ENCODE measurements at regions of chr1 and their contacts with region 1.

Region 1: GRCh38 chr1:232805269-232806185 is at the start of gene MAP10:
- DNase-seq: peak; percentile 77
- H3K4me3 Mint-ChIP-seq: peak within 1 kb of the TSS; percentile 90
- H3K27ac Mint-ChIP-seq: peak within 1 kb of the TSS; percentile 79
- H3K4me1 Mint-ChIP-seq: peaks cover 31% of the 10 kb centered on the region
- H3K27me3 Mint-ChIP-seq: peaks cover 6% of the 10 kb centered on the region
- total RNA-seq, gene MAP10: 3.0 and 3.2 TPM in 2 replicates

Region 2: DNA sequence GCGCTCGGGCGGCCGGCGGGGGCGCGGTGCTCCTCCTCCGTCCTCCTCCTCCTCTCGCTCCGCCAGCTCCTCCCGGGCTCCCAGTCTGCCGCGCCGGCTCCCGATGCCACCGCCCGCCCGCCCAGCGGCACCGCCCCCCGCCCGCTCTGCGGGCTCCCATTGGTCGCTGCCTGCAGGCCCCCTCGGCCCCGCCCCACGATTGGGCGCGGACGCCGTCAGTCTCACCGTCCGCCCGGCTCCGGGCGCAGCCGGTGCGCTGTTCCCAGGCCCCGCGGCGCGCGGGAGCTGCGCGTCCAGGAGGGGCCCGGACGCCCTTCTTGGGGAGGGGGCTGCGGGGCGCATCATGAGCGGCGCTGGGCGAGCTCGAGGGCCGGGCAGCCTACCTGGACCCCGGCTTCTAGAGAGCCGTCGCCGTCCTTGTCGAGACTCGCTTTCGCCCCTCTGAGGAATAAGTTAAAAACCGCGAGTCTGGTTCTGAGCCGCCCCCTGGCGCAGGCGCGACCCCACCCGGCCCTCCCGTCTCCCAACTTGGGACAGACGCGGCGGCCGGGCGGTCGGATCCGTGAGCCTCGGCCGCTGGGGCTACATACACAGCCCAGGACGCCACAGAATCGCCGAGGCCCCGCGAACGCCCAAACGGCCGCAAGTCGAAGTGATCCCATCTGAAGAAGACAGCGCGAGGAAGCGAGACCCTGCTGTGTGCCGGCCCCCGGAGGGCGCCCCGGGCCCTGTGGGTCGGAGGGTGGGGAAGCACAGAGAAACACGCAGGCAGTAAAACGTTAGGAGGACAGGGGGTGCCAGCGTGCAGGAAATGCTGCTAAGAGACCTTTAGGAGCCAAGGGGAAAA is 175.3 kb before region 1 on chr1 and contains the start of gene SIPA1L2:
- intact Hi-C with region 1: loop called (anchors 5 kb)
- DNase-seq: peak; percentile 80
- H3K4me3 Mint-ChIP-seq: peak within 1 kb of the TSS; percentile 86
- H3K27ac Mint-ChIP-seq: no peak within 1 kb of the TSS
- H3K4me1 Mint-ChIP-seq: peaks cover 9% of the 10 kb centered on the region
- H3K27me3 Mint-ChIP-seq: peaks cover 57% of the 10 kb centered on the region
- total RNA-seq, gene SIPA1L2: 3.4 and 3.7 TPM in 2 replicates

Region 3: GRCh38 chr1:233113009-233113879 is 307.7 kb after region 1 on chr1:
- intact Hi-C with region 1: loop called (anchors 10 kb)
- DNase-seq: peak; percentile 31
- H3K4me3 Mint-ChIP-seq: peak overlapping the region; percentile 47
- H3K27ac Mint-ChIP-seq: peak overlapping the region; percentile 79
- H3K4me1 Mint-ChIP-seq: peaks cover 29% of the 10 kb centered on the region
- H3K27me3 Mint-ChIP-seq: no peaks in the 10 kb centered on the region